IMR-90 (cell line): ENCODE measurements at regions of chr9 and their contacts with region 1.

Region 1: DNA sequence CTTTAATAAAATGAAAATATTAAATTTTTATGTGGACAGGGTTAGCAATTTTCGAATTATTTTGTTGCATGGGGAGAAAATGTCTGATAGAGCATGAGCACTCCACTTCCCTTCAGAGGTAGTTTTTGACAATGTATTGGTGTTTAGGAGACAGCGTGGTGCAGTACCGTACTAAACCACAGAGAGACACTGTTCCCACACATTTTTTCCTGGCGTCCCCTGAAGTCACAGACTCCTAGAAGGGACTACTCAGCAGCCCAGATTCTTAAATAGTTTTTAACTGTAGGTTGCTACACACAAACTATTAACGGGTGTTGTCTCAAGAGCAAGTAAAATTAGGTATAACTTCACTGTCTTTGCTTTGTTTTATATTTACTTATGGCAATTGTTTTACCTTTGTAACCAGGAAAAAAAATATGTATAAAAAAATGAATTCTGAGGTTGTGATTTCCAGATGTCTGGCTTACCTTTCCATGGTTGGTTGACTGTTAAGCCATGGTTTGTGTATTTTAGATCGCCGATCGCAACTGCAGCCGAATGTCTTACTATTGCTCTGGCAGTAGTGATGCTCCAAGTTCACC is 171.2 kb downstream of the DOCK8 start:
- DNase-seq: peak; percentile 52
- ATAC-seq: peak; percentile 99
- H3K4me3 ChIP-seq: no peak overlapping the region
- H3K27ac ChIP-seq: no peak overlapping the region
- H3K4me1 ChIP-seq: no peaks in the 10 kb centered on the region
- H3K27me3 ChIP-seq: peaks cover 3% of the 10 kb centered on the region
- CTCF ChIP-seq: peak; percentile 81
- POLR2A ChIP-seq: no peak
- RAD21 ChIP-seq: peak; percentile 80

Region 2: DNA sequence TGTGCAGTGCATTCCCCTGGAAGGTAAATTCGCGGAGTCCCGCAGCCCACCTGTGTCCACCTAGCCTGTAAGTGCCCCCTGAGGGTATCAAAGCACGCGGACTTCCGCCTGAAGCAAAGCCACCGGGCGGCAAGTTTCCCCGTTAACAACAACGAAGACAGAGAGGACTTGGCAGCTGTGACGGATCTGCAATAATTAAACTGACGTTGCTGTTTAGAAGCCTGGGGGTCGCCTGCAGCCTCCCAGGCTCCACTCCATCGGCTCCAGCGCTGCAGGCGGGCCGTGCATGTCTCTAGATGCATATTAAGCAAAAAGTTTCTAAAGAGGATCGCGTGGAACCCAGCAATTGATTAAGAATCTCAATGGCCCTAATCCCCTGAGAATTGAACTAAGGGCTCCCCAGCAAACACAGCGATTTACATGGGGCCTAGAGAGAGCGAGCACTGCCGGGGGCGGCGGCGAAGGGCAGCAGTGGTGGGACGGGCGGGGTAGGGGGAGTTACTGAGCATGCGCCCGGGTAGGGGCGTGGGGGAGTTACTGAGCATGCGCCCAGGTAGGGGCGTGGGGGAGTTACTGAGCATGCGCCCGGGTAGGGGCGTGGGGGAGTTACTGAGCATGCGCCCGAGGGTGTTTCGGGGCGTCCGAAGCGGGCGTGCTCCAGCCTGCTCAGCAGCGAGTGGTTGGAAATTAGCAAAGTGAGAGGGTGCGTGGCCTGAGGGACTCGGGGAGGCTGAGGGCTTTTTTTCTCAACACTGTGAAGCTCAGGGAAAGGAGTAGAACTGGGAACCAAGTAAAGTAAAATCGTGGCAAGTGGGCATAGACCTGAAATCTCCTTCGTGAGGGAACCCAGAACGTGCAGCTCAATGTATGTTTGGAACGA is 84.0 kb after region 1 on chr9:
- CTCF ChIA-PET with region 1: no interaction called
- POLR2A ChIA-PET with region 1: no interaction called
- dilution Hi-C with region 1: no loop called
- in situ Hi-C with region 1: no loop called
- intact Hi-C with region 1: loop called (anchors 1 kb)
- DNase-seq: peak; percentile 64
- ATAC-seq: peak; percentile 98
- H3K4me3 ChIP-seq: peak overlapping the region; percentile 59
- H3K27ac ChIP-seq: peak overlapping the region; percentile 65
- H3K4me1 ChIP-seq: peaks cover 7% of the 10 kb centered on the region
- H3K27me3 ChIP-seq: no peaks in the 10 kb centered on the region
- CTCF ChIP-seq: no peak
- POLR2A ChIP-seq: no peak
- RAD21 ChIP-seq: no peak

Region 3: GRCh38 chr9:546797-547223 is 160.9 kb after region 1 on chr9:
- CTCF ChIA-PET with region 1: no interaction called
- POLR2A ChIA-PET with region 1: no interaction called
- dilution Hi-C with region 1: no loop called
- in situ Hi-C with region 1: no loop called
- intact Hi-C with region 1: loop called (anchors 1 kb)
- DNase-seq: no peak
- ATAC-seq: peak; percentile 62
- H3K4me3 ChIP-seq: no peak overlapping the region
- H3K27ac ChIP-seq: no peak overlapping the region
- H3K4me1 ChIP-seq: no peaks in the 10 kb centered on the region
- H3K27me3 ChIP-seq: peaks cover 2% of the 10 kb centered on the region
- CTCF ChIP-seq: 0 out of 2 replicates have a peak, but pooled peaks have one; percentile 3
- POLR2A ChIP-seq: no peak
- RAD21 ChIP-seq: no peak

Region 4: GRCh38 chr9:763692-764524 is 378.0 kb after region 1 on chr9:
- CTCF ChIA-PET with region 1: no interaction called
- POLR2A ChIA-PET with region 1: no interaction called
- dilution Hi-C with region 1: no loop called
- in situ Hi-C with region 1: no loop called
- intact Hi-C with region 1: loop called (anchors 5 kb)
- DNase-seq: peak; percentile 56
- ATAC-seq: peak; percentile 94
- H3K4me3 ChIP-seq: no peak overlapping the region
- H3K27ac ChIP-seq: no peak overlapping the region
- H3K4me1 ChIP-seq: peaks cover 2% of the 10 kb centered on the region; the same call in 1 of the 2 replicates
- H3K27me3 ChIP-seq: no peaks in the 10 kb centered on the region; the same call in 1 of the 2 replicates
- CTCF ChIP-seq: peak; percentile 67
- POLR2A ChIP-seq: no peak
- RAD21 ChIP-seq: peak; percentile 84

Region 5: GRCh38 chr9:1009101-1009707 is 623.3 kb after region 1 on chr9:
- CTCF ChIA-PET with region 1: interaction called, 3 read pairs
- POLR2A ChIA-PET with region 1: no interaction called
- dilution Hi-C with region 1: no loop called
- in situ Hi-C with region 1: loop called (anchors 5 kb)
- intact Hi-C with region 1: loop called (anchors 1 kb)
- DNase-seq: peak; percentile 60
- ATAC-seq: peak; percentile 96
- H3K4me3 ChIP-seq: no peak overlapping the region
- H3K27ac ChIP-seq: no peak overlapping the region
- H3K4me1 ChIP-seq: no peaks in the 10 kb centered on the region
- H3K27me3 ChIP-seq: no peaks in the 10 kb centered on the region
- CTCF ChIP-seq: peak; percentile 93
- POLR2A ChIP-seq: no peak
- RAD21 ChIP-seq: peak; percentile 97